ENCODE measurements at regions of chr1 and their contacts with region 1.

Region 1: DNA sequence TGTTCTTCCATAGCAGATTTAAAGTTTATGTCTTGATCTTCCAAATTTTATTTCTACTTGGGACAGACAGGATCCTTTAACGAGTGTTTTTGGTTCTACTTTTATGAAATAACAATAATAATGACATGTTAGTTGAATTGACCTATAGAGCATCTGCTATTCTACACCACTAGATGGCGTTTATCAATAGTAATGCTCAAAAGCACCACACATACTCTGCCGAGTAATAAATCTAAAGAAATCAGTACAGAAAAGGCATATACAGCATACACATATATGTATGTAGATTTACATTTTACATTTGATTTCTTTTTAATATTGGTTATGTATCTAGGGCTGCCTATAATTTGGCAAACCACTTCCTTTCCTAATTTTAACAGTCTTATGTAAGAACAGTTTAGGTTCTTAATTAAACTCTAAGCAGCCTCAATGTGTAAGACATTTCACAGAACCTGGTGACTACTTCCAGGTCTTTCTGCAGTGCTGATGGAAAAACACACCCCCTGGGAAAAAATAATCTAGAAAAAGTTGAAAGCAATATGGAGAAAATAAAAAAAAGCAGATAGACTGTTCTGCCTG is 5.9 kb upstream of the SIPA1L2 start:
- DNase-seq: no peak
- H3K4me3 Mint-ChIP-seq: no peak overlapping the region
- H3K27ac Mint-ChIP-seq: no peak overlapping the region
- H3K4me1 Mint-ChIP-seq: no peaks in the 10 kb centered on the region
- H3K27me3 Mint-ChIP-seq: peaks cover 24% of the 10 kb centered on the region
- CTCF ChIP-seq: no peak

Region 2: DNA sequence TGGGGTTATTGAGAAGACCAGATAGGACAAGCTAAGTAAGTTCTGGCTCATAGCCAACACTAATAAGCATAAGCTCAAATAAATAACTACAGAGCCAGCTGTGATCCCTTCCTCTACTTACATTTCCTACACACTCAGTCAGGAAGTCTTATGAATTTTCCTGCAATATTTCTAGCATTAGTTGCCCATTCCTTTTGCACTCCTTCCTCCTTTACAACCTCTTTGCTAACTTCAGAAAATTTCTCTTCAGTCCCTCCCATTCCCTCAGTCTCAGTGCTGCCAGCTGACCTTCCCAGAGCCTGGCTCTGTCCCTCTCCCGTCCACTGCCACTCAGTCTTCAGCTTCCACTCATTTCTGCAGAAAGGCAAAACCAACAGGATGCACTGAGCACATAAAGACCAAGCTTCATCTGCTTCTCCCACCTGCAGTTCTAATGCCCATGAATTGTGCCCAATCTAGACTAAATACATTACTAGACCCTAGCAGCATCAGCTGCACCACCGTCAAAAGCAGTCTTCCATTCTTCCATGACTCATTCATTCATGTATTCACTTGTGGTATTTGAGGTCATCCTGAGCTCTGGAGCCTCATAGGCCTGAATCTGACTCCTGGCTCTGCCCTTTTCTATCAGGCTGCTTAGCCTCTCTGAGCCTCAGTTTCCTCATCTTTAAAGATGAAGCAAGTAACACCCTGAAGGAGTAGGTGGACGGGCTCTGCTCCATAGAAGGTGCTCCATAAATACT is 48.7 kb after region 1 on chr1:
- CTCF ChIA-PET with region 1: no interaction called
- intact Hi-C with region 1: no loop called
- DNase-seq: no peak
- H3K4me3 Mint-ChIP-seq: no peak overlapping the region
- H3K27ac Mint-ChIP-seq: no peak overlapping the region
- H3K4me1 Mint-ChIP-seq: peaks cover 8% of the 10 kb centered on the region
- H3K27me3 Mint-ChIP-seq: peaks cover 84% of the 10 kb centered on the region
- CTCF ChIP-seq: no peak

Region 3: DNA sequence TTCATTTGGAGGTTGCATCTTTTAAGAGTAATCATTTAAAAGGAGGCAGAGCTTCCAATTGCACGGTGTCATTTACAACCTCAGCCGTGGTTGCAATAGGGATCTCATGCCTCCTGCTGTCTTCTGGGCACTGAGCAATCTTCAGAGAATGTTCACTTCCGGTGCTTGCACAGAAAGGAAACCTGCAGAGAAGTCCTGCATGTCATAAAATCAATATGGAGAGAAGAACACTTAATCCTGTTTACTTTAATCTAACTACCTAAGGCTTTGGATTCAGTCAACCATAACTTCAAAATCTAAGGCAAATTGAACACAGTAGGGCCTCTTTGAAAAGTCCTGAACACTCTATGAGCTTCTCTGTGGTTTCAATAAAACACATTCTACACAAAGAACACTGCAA is 158.1 kb after region 1 on chr1:
- CTCF ChIA-PET with region 1: no interaction called
- intact Hi-C with region 1: loop called (anchors 5 kb)
- DNase-seq: peak; percentile 10
- H3K4me3 Mint-ChIP-seq: no peak overlapping the region
- H3K27ac Mint-ChIP-seq: no peak overlapping the region
- H3K4me1 Mint-ChIP-seq: peaks cover 9% of the 10 kb centered on the region
- H3K27me3 Mint-ChIP-seq: peaks cover 2% of the 10 kb centered on the region
- CTCF ChIP-seq: no peak

Measured in Calu3 (cell line).